MCF 10A (cell line): ENCODE measurements at regions of chr14 and their contacts with region 1.

Region 1: DNA sequence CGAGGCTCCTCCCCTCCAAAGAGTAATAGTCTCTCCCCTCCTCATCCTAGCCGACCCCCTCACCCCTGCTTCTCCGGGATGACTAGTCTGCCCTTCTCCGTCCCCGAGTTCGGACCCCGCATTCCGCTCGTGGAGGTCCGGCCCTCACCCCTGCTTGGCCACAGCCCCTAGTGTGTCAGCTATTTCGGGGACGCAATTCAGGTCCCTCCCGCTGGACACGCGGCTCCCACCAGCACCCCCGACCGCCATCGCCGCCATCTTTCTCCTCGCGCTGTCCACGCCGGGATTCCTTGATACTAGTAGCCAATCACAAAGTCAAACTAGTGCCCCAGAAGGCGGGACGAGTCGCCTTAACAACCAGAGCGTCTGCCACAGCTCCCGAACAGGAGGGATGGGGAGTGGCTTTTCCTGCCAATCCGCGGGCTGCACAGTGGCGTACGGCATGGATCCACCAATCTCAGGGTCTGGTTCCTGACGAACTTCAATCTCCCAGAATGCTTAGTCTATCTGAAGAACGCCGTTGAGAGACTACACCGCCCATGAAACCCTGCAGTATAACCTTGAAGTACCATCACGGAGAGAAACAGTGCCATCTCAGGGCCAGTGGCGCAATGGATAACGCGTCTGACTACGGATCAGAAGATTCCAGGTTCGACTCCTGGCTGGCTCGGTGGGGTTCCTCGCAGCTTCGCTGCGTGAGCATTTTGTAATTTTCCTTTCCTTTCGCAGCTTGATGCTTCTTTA is at the start of gene PRMT5:
- DNase-seq: peak; percentile 99
- H3K4me3 Mint-ChIP-seq: no peak within 1 kb of the TSS
- H3K27ac Mint-ChIP-seq: no peak within 1 kb of the TSS
- H3K4me1 Mint-ChIP-seq: peaks cover 15% of the 10 kb centered on the region
- H3K27me3 Mint-ChIP-seq: no peaks in the 10 kb centered on the region
- CTCF ChIP-seq: no peak
- total RNA-seq, gene PRMT5: 175 and 201 TPM in 2 replicates

Region 2: GRCh38 chr14:22872033-22872832 is 57.0 kb before region 1 on chr14:
- CTCF ChIA-PET with region 1: interaction called, 11 read pairs
- POLR2A ChIA-PET with region 1: interaction called, 27 read pairs
- intact Hi-C with region 1: loop called (anchors 1 kb)
- DNase-seq: peak; percentile 90
- H3K4me3 Mint-ChIP-seq: peak overlapping the region; percentile 79
- H3K27ac Mint-ChIP-seq: peak overlapping the region; percentile 91
- H3K4me1 Mint-ChIP-seq: peaks cover 20% of the 10 kb centered on the region
- H3K27me3 Mint-ChIP-seq: no peaks in the 10 kb centered on the region
- CTCF ChIP-seq: peak; percentile 81

Region 3: DNA sequence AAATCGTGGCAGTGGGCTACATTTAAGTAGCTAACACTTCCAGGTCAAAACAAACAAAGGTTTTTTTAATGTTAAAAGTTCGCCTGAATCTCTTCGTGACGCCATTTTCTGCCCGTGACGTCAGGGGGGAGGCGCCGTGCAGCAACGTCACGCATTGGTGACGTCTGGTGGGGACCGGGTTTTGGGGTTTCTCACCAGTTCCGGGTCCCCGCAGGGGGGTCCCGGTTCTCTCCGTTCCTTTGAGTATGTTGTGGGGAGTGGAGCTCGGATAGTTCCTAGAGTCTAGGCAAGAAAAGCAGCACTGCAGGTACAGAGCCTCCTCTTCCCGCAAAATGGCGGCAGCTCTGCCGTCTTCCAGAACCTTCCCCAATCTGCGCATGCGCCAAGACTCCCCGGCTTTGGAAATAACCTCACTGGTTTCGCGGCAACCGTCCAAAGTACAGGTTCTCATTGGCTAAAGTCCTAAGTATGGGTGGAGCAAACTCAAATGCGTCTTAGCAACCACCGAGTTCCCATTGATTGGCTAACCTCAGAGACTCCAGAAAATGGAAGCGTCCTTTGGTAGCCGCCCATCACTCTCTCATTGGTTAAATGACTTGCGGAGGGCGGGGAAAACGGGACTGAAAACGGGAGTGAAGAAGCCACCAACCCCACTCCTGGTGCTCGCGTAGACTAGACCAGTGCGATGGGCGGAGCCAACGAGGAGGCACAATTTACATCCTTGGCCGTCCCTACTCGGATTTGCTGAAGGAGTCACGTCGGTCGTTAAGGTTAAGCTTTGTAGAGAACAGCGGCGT is 10.3 kb before region 1 on chr14 and contains the start of gene RBM23:
- CTCF ChIA-PET with region 1: interaction called, 20 read pairs
- POLR2A ChIA-PET with region 1: interaction called, 90 read pairs
- intact Hi-C with region 1: no loop called
- DNase-seq: peak; percentile 100
- H3K4me3 Mint-ChIP-seq: peak within 1 kb of the TSS; percentile 87
- H3K27ac Mint-ChIP-seq: peak within 1 kb of the TSS; percentile 100
- H3K4me1 Mint-ChIP-seq: peaks cover 31% of the 10 kb centered on the region
- H3K27me3 Mint-ChIP-seq: no peaks in the 10 kb centered on the region
- CTCF ChIP-seq: no peak
- total RNA-seq, gene RBM23: 57.6 and 60.6 TPM in 2 replicates

Region 4: GRCh38 chr14:22939684-22940083 is 10.4 kb after region 1 on chr14:
- CTCF ChIA-PET with region 1: interaction called, 15 read pairs
- POLR2A ChIA-PET with region 1: interaction called, 15 read pairs
- intact Hi-C with region 1: no loop called
- DNase-seq: no peak
- H3K4me3 Mint-ChIP-seq: no peak overlapping the region
- H3K27ac Mint-ChIP-seq: no peak overlapping the region
- H3K4me1 Mint-ChIP-seq: no peaks in the 10 kb centered on the region
- H3K27me3 Mint-ChIP-seq: no peaks in the 10 kb centered on the region
- CTCF ChIP-seq: no peak

Region 5: DNA sequence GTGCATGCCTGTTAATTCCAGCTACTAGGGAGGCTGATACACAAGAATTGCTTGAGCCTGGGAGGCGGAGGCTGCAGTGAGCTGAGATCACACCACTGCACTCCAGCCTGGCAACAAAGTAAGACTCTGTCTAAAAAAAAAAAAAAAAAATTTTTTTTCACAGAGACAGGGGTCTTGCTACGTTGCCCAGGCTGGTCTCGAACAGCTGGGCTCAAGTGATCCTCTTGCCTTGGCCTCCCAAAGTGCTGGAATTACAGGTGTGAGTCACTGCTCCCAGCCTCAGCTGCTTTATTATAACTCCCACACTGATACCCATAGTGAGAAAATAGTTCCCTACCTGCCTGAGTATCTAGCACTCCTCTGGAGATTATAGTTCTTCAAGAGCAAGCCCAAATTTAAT is 16.4 kb after region 1 on chr14:
- CTCF ChIA-PET with region 1: interaction called, 22 read pairs
- POLR2A ChIA-PET with region 1: interaction called, 15 read pairs
- intact Hi-C with region 1: no loop called
- DNase-seq: no peak
- H3K4me3 Mint-ChIP-seq: no peak overlapping the region
- H3K27ac Mint-ChIP-seq: no peak overlapping the region
- H3K4me1 Mint-ChIP-seq: no peaks in the 10 kb centered on the region
- H3K27me3 Mint-ChIP-seq: no peaks in the 10 kb centered on the region
- CTCF ChIP-seq: no peak

Region 6: GRCh38 chr14:22973217-22974032 is 44.1 kb after region 1 on chr14:
- CTCF ChIA-PET with region 1: interaction called, 20 read pairs
- POLR2A ChIA-PET with region 1: interaction called, 70 read pairs
- intact Hi-C with region 1: no loop called
- DNase-seq: peak; percentile 78
- H3K4me3 Mint-ChIP-seq: peak overlapping the region; percentile 50
- H3K27ac Mint-ChIP-seq: peak overlapping the region; percentile 51
- H3K4me1 Mint-ChIP-seq: peaks cover 51% of the 10 kb centered on the region
- H3K27me3 Mint-ChIP-seq: no peaks in the 10 kb centered on the region
- CTCF ChIP-seq: peak; percentile 65

Region 7: DNA sequence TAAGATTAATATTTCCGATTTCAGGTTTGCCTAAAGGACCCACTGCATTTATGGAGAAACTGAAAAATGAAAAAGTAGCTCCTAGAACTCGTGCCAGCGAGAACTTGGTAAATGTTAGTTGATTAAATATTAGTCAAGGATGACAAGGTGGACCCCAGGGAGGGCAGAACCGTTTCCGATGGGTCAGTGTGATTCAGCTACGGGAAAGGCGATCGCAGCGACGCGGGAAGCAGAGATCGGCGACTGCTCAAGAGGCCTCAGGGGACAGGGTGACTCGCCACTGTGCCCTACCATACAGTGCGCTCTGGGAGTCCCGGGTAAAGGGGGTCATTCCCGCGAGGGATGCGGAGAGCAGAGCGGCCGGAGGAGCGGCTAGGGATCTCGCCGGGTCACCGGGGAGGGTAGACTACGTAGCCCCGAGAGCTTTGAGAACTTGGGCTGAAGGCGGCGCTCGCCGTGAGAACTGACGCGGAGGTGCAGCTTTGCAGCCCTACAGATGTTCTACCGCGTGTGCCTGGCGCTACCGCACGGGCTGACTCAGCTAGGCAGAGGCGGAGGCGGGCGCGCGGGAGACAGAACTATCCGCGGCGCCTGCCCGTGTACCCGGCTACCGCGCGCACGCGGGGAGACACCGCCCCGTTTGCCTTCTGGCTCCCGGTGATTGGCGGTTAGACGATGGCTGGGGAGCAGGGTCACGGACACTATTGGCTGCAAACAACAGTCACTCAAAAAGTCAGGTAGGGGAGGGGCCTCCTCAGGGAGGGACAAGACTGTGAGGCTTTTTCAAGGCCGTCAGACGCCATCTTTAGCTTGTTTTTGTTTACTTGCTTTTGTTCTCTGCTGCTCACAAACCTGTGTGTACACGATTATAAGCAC is 77.5 kb after region 1 on chr14:
- CTCF ChIA-PET with region 1: interaction called, 3 read pairs
- POLR2A ChIA-PET with region 1: interaction called, 20 read pairs
- intact Hi-C with region 1: no loop called
- DNase-seq: peak; percentile 98
- H3K4me3 Mint-ChIP-seq: peak overlapping the region; percentile 94
- H3K27ac Mint-ChIP-seq: peak overlapping the region; percentile 99
- H3K4me1 Mint-ChIP-seq: peaks cover 38% of the 10 kb centered on the region
- H3K27me3 Mint-ChIP-seq: no peaks in the 10 kb centered on the region
- CTCF ChIP-seq: peak; percentile 15

Region 8: GRCh38 chr14:23320774-23321571 is 391.7 kb after region 1 on chr14 and contains the start of gene PABPN1:
- CTCF ChIA-PET with region 1: no interaction called
- POLR2A ChIA-PET with region 1: no interaction called
- intact Hi-C with region 1: no loop called
- DNase-seq: peak; percentile 100
- H3K4me3 Mint-ChIP-seq: peak within 1 kb of the TSS; percentile 84
- H3K27ac Mint-ChIP-seq: peak within 1 kb of the TSS; percentile 97
- H3K4me1 Mint-ChIP-seq: peaks cover 11% of the 10 kb centered on the region
- H3K27me3 Mint-ChIP-seq: no peaks in the 10 kb centered on the region
- CTCF ChIP-seq: no peak
- total RNA-seq, gene PABPN1: 153 and 167 TPM in 2 replicates